H1 (cell line): ENCODE measurements at regions of chr11 and their contacts with region 1.

Region 1: GRCh38 chr11:61792310-61793085 is at the starts of genes FEN1 and TMEM258:
- DNase-seq: peak; percentile 80 to 95
- H3K4me3 ChIP-seq: peak within 1 kb of the TSS; percentile 86 to 99 (median 98)
- H3K27ac ChIP-seq: peak within 1 kb of the TSS; percentile 100
- H3K4me1 ChIP-seq: peaks cover 0 to 4% (median 0%) of the 10 kb centered on the region in 4 experiments; a peak in 1 of 7 replicates
- H3K27me3 ChIP-seq: no peaks in the 10 kb centered on the region
- CTCF ChIP-seq: peak in 1 of 3 experiments; percentile 4; a peak in 1 of 4 replicates
- EP300 ChIP-seq: no peak
- POLR2A ChIP-seq: peak; percentile 57 to 82
- RAD21 ChIP-seq: no peak
- total RNA-seq, gene FEN1: 84.5 and 86.1 TPM in 2 replicates
- total RNA-seq, gene TMEM258: 186 and 191 TPM in 2 replicates

Region 2: DNA sequence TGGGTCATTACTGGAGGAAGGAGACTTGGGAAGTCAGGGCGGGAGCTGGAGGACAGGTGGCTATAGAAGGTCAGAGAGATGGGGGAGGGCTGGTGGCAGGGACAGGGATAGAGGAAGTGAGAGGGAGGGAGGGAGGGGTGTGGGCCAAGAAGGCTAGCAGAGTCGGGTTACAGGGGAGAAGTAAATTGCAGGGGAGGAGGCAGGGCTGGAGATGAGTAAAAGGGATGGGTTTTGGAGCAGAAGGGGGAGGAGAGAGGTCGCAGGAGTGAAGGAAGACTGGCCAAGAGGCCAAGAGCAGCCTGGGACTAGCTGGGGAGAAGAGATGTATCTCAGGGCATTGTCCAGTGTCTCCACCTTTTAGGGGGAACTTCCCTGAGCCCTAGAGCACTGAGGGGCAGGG is 250.9 kb before region 1 on chr11:
- CTCF ChIA-PET with region 1: no interaction called
- POLR2A ChIA-PET with region 1: no interaction called
- DNase-seq: no peak
- H3K4me3 ChIP-seq: no peak overlapping the region
- H3K27ac ChIP-seq: no peak overlapping the region
- H3K4me1 ChIP-seq: peaks cover 5 to 35% (median 18%) of the 10 kb centered on the region in 4 experiments
- H3K27me3 ChIP-seq: no peaks in the 10 kb centered on the region; a peak in 1 of 7 replicates
- CTCF ChIP-seq: no peak
- EP300 ChIP-seq: no peak
- POLR2A ChIP-seq: no peak
- RAD21 ChIP-seq: no peak

Region 3: GRCh38 chr11:61756452-61757212 is 35.9 kb before region 1 on chr11:
- CTCF ChIA-PET with region 1: interaction called, 168 read pairs
- POLR2A ChIA-PET with region 1: interaction called, 87 read pairs
- DNase-seq: no peak
- H3K4me3 ChIP-seq: no peak overlapping the region
- H3K27ac ChIP-seq: no peak overlapping the region
- H3K4me1 ChIP-seq: peaks cover 0 to 19% (median 13%) of the 10 kb centered on the region in 4 experiments; a peak in 6 of 7 replicates
- H3K27me3 ChIP-seq: peaks cover 4 to 21% (median 15%) of the 10 kb centered on the region in 4 experiments
- CTCF ChIP-seq: no peak
- EP300 ChIP-seq: no peak
- POLR2A ChIP-seq: no peak
- RAD21 ChIP-seq: no peak

Region 4: GRCh38 chr11:61803889-61804647 is 11.6 kb after region 1 on chr11:
- CTCF ChIA-PET with region 1: interaction called, 45 read pairs
- POLR2A ChIA-PET with region 1: interaction called, 354 read pairs
- DNase-seq: no peak
- H3K4me3 ChIP-seq: no peak overlapping the region
- H3K27ac ChIP-seq: no peak overlapping the region
- H3K4me1 ChIP-seq: no peaks in the 10 kb centered on the region
- H3K27me3 ChIP-seq: no peaks in the 10 kb centered on the region
- CTCF ChIP-seq: no peak
- EP300 ChIP-seq: no peak
- POLR2A ChIP-seq: 0 out of 3 replicates have a peak, but pooled peaks of 1 of the 2 experiments have one; percentile 21
- RAD21 ChIP-seq: no peak

Region 5: GRCh38 chr11:61834278-61835048 is 42.0 kb after region 1 on chr11:
- CTCF ChIA-PET with region 1: interaction called, 15 read pairs
- POLR2A ChIA-PET with region 1: interaction called, 17 read pairs
- DNase-seq: peak in 1 of 2 experiments; percentile 55
- H3K4me3 ChIP-seq: peak overlapping the region in 1 of 4 experiments; percentile 5; a peak in 1 of 8 replicates
- H3K27ac ChIP-seq: peak overlapping the region; percentile 73
- H3K4me1 ChIP-seq: peaks cover 11 to 44% (median 26%) of the 10 kb centered on the region in 4 experiments
- H3K27me3 ChIP-seq: no peaks in the 10 kb centered on the region
- CTCF ChIP-seq: no peak
- EP300 ChIP-seq: no peak
- POLR2A ChIP-seq: peak in 1 of 2 experiments; percentile 39; a peak in 1 of 3 replicates
- RAD21 ChIP-seq: no peak

Region 6: GRCh38 chr11:61871158-61871597 is 78.7 kb after region 1 on chr11:
- CTCF ChIA-PET with region 1: interaction called, 10 read pairs
- POLR2A ChIA-PET with region 1: interaction called, 6 read pairs
- DNase-seq: peak; percentile 73 to 94
- H3K4me3 ChIP-seq: peak overlapping the region in 2 of 4 experiments; percentile 22 to 30; a peak in 5 of 8 replicates
- H3K27ac ChIP-seq: no peak overlapping the region
- H3K4me1 ChIP-seq: peaks cover 4 to 14% (median 4%) of the 10 kb centered on the region in 4 experiments; a peak in 6 of 7 replicates
- H3K27me3 ChIP-seq: peaks cover 0 to 11% (median 8%) of the 10 kb centered on the region in 4 experiments; a peak in 5 of 7 replicates
- CTCF ChIP-seq: peak in 2 of 3 experiments; percentile 94 to 97; a peak in 3 of 4 replicates
- EP300 ChIP-seq: 0 out of 3 replicates have a peak, but pooled peaks of 1 of the 2 experiments have one; percentile 27
- POLR2A ChIP-seq: no peak
- RAD21 ChIP-seq: peak; percentile 97 to 98